Naive thymus-derived CD4-positive, alpha-beta T cell (primary cell): ENCODE measurements at regions of chr1 and their contacts with region 1.

Region 1: GRCh38 chr1:187862554-187862953 is 1033.8 kb downstream of the PLA2G4A start:
- DNase-seq: no peak
- ATAC-seq: no peak
- H3K4me3 ChIP-seq: no peak overlapping the region
- H3K4me3 Mint-ChIP-seq: no peak overlapping the region
- H3K27ac ChIP-seq: no peak overlapping the region
- H3K27ac Mint-ChIP-seq: no peak overlapping the region
- H3K4me1 ChIP-seq: no peaks in the 10 kb centered on the region
- H3K4me1 Mint-ChIP-seq: no peaks in the 10 kb centered on the region
- H3K27me3 ChIP-seq: no peaks in the 10 kb centered on the region
- H3K27me3 Mint-ChIP-seq: no peaks in the 10 kb centered on the region

Region 2: GRCh38 chr1:187051618-187052232 is 810.8 kb before region 1 on chr1:
- CTCF ChIA-PET with region 1: no interaction called
- POLR2A ChIA-PET with region 1: no interaction called
- intact Hi-C with region 1: loop called in 1 of 2 experiments (anchors 10 kb)
- DNase-seq: peak in 5 of 9 donors; percentile 20 to 42 (median 31)
- ATAC-seq: peak; percentile 46
- H3K4me3 ChIP-seq: no peak overlapping the region
- H3K4me3 Mint-ChIP-seq: no peak overlapping the region
- H3K27ac ChIP-seq: no peak overlapping the region
- H3K27ac Mint-ChIP-seq: no peak overlapping the region
- H3K4me1 ChIP-seq: no peaks in the 10 kb centered on the region
- H3K4me1 Mint-ChIP-seq: peaks cover 0 to 5% (median 0%) of the 10 kb centered on the region in 7 donors
- H3K27me3 ChIP-seq: no peaks in the 10 kb centered on the region
- H3K27me3 Mint-ChIP-seq: peaks cover 0 to 6% (median 0%) of the 10 kb centered on the region in 5 donors